HepG2 (cell line): ENCODE measurements at regions of chr9 and their contacts with region 1.

Region 1: GRCh38 chr9:78397454-78397853 is 100.5 kb downstream of the PSAT1 start:
- DNase-seq: no peak
- ATAC-seq: no peak
- H3K4me3 ChIP-seq: no peak overlapping the region
- H3K27ac ChIP-seq: no peak overlapping the region
- H3K4me1 ChIP-seq: peaks cover 47% of the 10 kb centered on the region
- H3K27me3 ChIP-seq: no peaks in the 10 kb centered on the region
- CTCF ChIP-seq: no peak
- EP300 ChIP-seq: no peak
- POLR2A ChIP-seq: no peak
- RAD21 ChIP-seq: no peak

Region 2: DNA sequence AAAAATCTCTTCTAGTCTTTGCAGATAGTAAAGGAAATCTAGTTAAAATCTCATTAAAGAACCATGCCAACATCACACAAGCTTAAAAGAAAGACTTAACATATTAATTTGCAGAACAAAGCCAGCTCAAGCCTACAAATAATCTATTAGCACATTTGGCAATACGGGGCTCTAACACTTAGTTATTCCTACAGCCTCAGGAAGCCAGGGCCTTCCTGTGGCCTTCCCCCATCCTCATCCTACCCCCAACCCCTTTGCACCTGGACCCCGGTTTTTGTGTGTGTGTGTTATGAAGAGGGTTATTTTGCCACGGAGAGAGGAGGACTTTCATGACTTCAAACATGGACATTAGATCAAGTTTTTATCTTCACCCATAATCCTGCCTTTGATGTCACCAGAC is 1313.4 kb before region 1 on chr9:
- CTCF ChIA-PET with region 1: no interaction called
- POLR2A ChIA-PET with region 1: no interaction called
- in situ Hi-C with region 1: no loop called
- intact Hi-C with region 1: loop called (anchors 5 kb)
- DNase-seq: no peak
- ATAC-seq: no peak
- H3K4me3 ChIP-seq: no peak overlapping the region
- H3K27ac ChIP-seq: no peak overlapping the region
- H3K4me1 ChIP-seq: no peaks in the 10 kb centered on the region
- H3K27me3 ChIP-seq: peaks cover 2 to 9% of the 10 kb centered on the region in 2 experiments; a peak in 2 of 5 replicates
- CTCF ChIP-seq: no peak
- EP300 ChIP-seq: no peak
- POLR2A ChIP-seq: no peak
- RAD21 ChIP-seq: no peak

Region 3: GRCh38 chr9:77864211-77864889 is 533.1 kb before region 1 on chr9:
- CTCF ChIA-PET with region 1: no interaction called
- POLR2A ChIA-PET with region 1: no interaction called
- in situ Hi-C with region 1: no loop called
- intact Hi-C with region 1: no loop called
- DNase-seq: no peak
- ATAC-seq: no peak
- H3K4me3 ChIP-seq: no peak overlapping the region
- H3K27ac ChIP-seq: no peak overlapping the region
- H3K4me1 ChIP-seq: peaks cover 10% of the 10 kb centered on the region
- H3K27me3 ChIP-seq: no peaks in the 10 kb centered on the region
- CTCF ChIP-seq: no peak
- EP300 ChIP-seq: no peak
- POLR2A ChIP-seq: no peak
- RAD21 ChIP-seq: no peak